Mammary epithelial cell (primary cell): ENCODE measurements at regions of chr10 and their contacts with region 1.

Region 1: GRCh38 chr10:98467506-98468346 is 21.0 kb upstream of the HPS1 start:
- DNase-seq: peak; percentile 73
- H3K4me3 ChIP-seq: peak overlapping the region; percentile 47 to 50 (median 48)
- H3K27ac ChIP-seq: no peak overlapping the region
- H3K4me1 ChIP-seq: peaks cover 7% of the 10 kb centered on the region
- H3K27me3 ChIP-seq: no peaks in the 10 kb centered on the region
- CTCF ChIP-seq: peak; percentile 85 to 91

Region 2: DNA sequence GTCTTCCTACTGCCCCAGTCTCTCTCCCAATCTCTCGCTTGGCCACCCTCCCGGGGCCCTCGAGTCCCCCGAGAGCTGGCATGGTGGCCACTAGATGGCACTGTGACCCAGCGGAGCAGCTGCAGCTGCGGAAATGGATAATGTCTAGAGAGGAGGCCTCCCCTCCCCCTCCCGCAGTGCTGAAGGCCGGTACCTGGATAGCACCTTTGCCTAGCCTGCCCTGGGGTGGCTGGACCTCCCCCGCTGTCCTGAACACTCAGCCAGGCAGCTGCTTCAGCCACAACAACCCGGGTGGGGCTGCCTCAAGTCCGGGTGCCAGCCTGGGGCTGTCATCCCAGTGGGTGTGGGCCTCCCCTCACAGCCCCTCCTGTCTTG is 552.9 kb before region 1 on chr10:
- CTCF ChIA-PET with region 1: no interaction called
- dilution Hi-C with region 1: no loop called
- in situ Hi-C with region 1: no loop called
- intact Hi-C with region 1: loop called (anchors 10 kb)
- DNase-seq: peak; percentile 48
- H3K4me3 ChIP-seq: no peak overlapping the region
- H3K27ac ChIP-seq: no peak overlapping the region
- H3K4me1 ChIP-seq: no peaks in the 10 kb centered on the region
- H3K27me3 ChIP-seq: peaks cover 7% of the 10 kb centered on the region
- CTCF ChIP-seq: peak; percentile 75 to 95

Region 3: GRCh38 chr10:98664331-98665042 is 196.8 kb after region 1 on chr10:
- CTCF ChIA-PET with region 1: no interaction called
- dilution Hi-C with region 1: no loop called
- in situ Hi-C with region 1: loop called in 1 of 2 experiments (anchors 5 kb)
- intact Hi-C with region 1: loop called (anchors 1 kb)
- DNase-seq: peak; percentile 16
- H3K4me3 ChIP-seq: no peak overlapping the region
- H3K27ac ChIP-seq: no peak overlapping the region
- H3K4me1 ChIP-seq: no peaks in the 10 kb centered on the region
- H3K27me3 ChIP-seq: peaks cover 2% of the 10 kb centered on the region
- CTCF ChIP-seq: peak; percentile 59 to 61

Region 4: DNA sequence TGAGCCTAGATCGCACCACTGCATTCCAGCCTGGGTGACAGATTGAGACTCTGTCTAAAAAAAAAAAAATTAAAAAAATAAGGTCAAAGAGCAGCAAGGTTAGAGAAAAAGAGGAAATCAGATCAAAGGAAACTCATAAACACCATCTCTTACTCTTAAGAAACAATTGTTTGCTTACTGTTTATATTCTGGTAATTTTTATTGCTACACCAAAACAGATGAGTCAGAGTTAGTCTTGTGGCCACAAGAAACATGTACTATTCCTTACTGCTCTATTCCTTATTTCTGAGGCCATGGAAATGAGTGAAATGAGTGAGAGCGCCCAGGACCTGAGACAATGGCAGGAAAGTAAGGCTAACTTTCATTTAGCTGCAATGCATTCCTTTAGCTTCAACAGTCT is 380.6 kb after region 1 on chr10:
- CTCF ChIA-PET with region 1: no interaction called
- dilution Hi-C with region 1: no loop called
- in situ Hi-C with region 1: no loop called
- intact Hi-C with region 1: loop called (anchors 10 kb)
- DNase-seq: no peak
- H3K4me3 ChIP-seq: no peak overlapping the region
- H3K27ac ChIP-seq: no peak overlapping the region
- H3K4me1 ChIP-seq: no peaks in the 10 kb centered on the region
- H3K27me3 ChIP-seq: no peaks in the 10 kb centered on the region
- CTCF ChIP-seq: no peak

Region 5: GRCh38 chr10:99172130-99172738 is 704.5 kb after region 1 on chr10:
- CTCF ChIA-PET with region 1: no interaction called
- dilution Hi-C with region 1: no loop called
- in situ Hi-C with region 1: no loop called
- intact Hi-C with region 1: loop called (anchors 1 kb)
- DNase-seq: peak; percentile 29
- H3K4me3 ChIP-seq: no peak overlapping the region
- H3K27ac ChIP-seq: no peak overlapping the region
- H3K4me1 ChIP-seq: no peaks in the 10 kb centered on the region
- H3K27me3 ChIP-seq: no peaks in the 10 kb centered on the region
- CTCF ChIP-seq: peak; percentile 69 to 91

Region 6: GRCh38 chr10:99248824-99249223 is 781.1 kb after region 1 on chr10:
- CTCF ChIA-PET with region 1: interaction called, 9 read pairs
- dilution Hi-C with region 1: no loop called
- in situ Hi-C with region 1: loop called (anchors 10 to 25 kb)
- intact Hi-C with region 1: loop called (anchors 1 kb)
- DNase-seq: no peak
- H3K4me3 ChIP-seq: no peak overlapping the region
- H3K27ac ChIP-seq: no peak overlapping the region
- H3K4me1 ChIP-seq: no peaks in the 10 kb centered on the region
- H3K27me3 ChIP-seq: no peaks in the 10 kb centered on the region
- CTCF ChIP-seq: no peak

Region 7: GRCh38 chr10:99370993-99371392 is 903.3 kb after region 1 on chr10:
- CTCF ChIA-PET with region 1: no interaction called
- dilution Hi-C with region 1: no loop called
- in situ Hi-C with region 1: no loop called
- intact Hi-C with region 1: loop called (anchors 5 kb)
- DNase-seq: peak; percentile 25
- H3K4me3 ChIP-seq: no peak overlapping the region
- H3K27ac ChIP-seq: no peak overlapping the region
- H3K4me1 ChIP-seq: no peaks in the 10 kb centered on the region
- H3K27me3 ChIP-seq: no peaks in the 10 kb centered on the region
- CTCF ChIP-seq: peak; percentile 46 to 64